B cell (primary cell): ENCODE measurements at regions of chr19 and their contacts with region 1.

Region 1: DNA sequence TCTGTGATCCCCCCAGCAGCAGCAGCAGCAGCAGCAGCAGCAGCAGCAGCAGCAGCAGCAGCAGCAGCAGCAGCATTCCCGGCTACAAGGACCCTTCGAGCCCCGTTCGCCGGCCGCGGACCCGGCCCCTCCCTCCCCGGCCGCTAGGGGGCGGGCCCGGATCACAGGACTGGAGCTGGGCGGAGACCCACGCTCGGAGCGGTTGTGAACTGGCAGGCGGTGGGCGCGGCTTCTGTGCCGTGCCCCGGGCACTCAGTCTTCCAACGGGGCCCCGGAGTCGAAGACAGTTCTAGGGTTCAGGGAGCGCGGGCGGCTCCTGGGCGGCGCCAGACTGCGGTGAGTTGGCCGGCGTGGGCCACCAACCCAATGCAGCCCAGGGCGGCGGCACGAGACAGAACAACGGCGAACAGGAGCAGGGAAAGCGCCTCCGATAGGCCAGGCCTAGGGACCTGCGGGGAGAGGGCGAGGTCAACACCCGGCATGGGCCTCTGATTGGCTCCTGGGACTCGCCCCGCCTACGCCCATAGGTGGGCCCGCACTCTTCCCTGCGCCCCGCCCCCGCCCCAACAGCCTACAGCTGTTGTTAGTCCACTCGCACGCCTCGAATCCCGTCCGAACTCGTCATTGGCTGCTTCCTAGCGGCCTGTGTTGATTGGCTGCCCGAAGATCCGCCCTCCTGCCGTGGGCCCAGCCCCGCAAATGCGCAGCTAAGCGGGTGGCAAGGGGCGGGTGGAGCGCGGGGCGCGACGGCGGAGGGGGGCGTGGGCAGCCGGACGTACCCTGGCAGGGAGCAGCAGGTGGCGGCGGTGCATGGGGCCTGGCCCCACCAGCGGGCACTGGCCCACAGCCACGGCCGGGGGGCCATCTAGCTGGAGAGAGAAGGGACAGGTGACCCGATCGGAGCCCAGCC is 1.4 kb upstream of the SIX5 start:
- DNase-seq: peak; percentile 95
- ATAC-seq: peak; percentile 68
- H3K4me3 ChIP-seq: peak overlapping the region in 4 of 5 experiments; percentile 71 to 88 (median 82)
- H3K4me3 Mint-ChIP-seq: peak overlapping the region; percentile 90
- H3K27ac ChIP-seq: peak overlapping the region; percentile 29 to 56
- H3K27ac Mint-ChIP-seq: peak overlapping the region; percentile 86
- H3K4me1 ChIP-seq: peaks cover 12 to 32% of the 10 kb centered on the region in 2 donors
- H3K4me1 Mint-ChIP-seq: peaks cover 29% of the 10 kb centered on the region
- H3K27me3 ChIP-seq: peaks cover 0 to 28% (median 8%) of the 10 kb centered on the region in 4 experiments
- H3K27me3 Mint-ChIP-seq: no peaks in the 10 kb centered on the region
- CTCF ChIP-seq: peak; percentile 96

Region 2: GRCh38 chr19:45621389-45621788 is 149.1 kb before region 1 on chr19:
- CTCF ChIA-PET with region 1: no interaction called
- POLR2A ChIA-PET with region 1: no interaction called
- intact Hi-C with region 1: no loop called
- DNase-seq: no peak
- ATAC-seq: no peak
- H3K4me3 ChIP-seq: no peak overlapping the region
- H3K4me3 Mint-ChIP-seq: no peak overlapping the region
- H3K27ac ChIP-seq: no peak overlapping the region
- H3K27ac Mint-ChIP-seq: no peak overlapping the region
- H3K4me1 ChIP-seq: no peaks in the 10 kb centered on the region
- H3K4me1 Mint-ChIP-seq: no peaks in the 10 kb centered on the region
- H3K27me3 ChIP-seq: no peaks in the 10 kb centered on the region
- H3K27me3 Mint-ChIP-seq: no peaks in the 10 kb centered on the region
- CTCF ChIP-seq: no peak

Region 3: GRCh38 chr19:45717166-45717982 is 53.1 kb before region 1 on chr19:
- CTCF ChIA-PET with region 1: interaction called, 4 read pairs
- POLR2A ChIA-PET with region 1: interaction called, 5 read pairs
- intact Hi-C with region 1: loop called (anchors 1 kb)
- DNase-seq: peak; percentile 97
- ATAC-seq: peak; percentile 95
- H3K4me3 ChIP-seq: peak overlapping the region; percentile 76 to 93 (median 82)
- H3K4me3 Mint-ChIP-seq: peak overlapping the region; percentile 91
- H3K27ac ChIP-seq: peak overlapping the region; percentile 76 to 94
- H3K27ac Mint-ChIP-seq: peak overlapping the region; percentile 97
- H3K4me1 ChIP-seq: peaks cover 18 to 25% of the 10 kb centered on the region in 2 donors
- H3K4me1 Mint-ChIP-seq: peaks cover 39% of the 10 kb centered on the region
- H3K27me3 ChIP-seq: no peaks in the 10 kb centered on the region
- H3K27me3 Mint-ChIP-seq: no peaks in the 10 kb centered on the region
- CTCF ChIP-seq: no peak

Region 4: DNA sequence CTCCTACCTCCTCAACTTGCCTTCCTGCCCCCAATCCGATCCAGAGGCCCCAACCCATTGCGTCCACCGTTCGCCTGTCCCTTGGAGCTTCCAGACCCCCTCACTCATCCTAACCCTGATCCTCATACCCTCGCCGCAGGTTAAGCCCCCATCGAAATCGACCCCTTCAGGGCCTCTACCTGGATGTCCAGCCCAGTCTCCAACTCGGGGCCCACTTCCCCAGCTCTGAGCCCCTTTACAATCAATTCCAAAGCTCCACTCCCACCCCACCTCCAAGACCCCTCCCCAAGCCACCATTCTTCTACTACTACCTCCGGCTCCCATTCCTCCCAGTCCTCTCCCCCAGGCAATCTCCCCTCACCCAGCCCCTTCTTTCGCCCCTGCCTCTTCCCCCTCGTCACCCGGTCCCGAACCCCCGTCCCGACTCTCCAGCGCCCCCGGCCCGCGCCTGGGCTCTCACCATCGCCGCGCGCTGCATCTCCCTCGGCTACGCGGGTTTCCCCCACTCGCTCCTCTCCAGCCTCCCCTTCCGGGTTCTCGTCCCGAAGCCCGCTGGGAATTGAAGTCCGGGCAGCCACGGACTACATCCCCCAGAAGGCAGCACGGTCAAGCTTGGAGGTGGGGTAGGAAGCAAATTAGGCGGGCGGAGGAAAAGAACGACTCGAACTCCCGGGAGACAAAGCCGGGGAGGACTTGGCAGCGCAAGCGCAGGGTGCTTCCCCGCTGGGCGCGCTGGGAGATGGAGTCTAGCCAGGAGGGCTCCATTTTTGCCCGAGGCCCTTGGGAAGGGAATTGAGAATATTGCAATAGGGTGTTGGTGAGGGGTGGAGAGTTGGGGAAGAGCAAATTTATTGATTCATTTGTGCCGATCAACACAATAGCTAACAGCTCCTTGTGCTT is 39.8 kb before region 1 on chr19 and contains the start of gene FBXO46:
- CTCF ChIA-PET with region 1: interaction called, 6 read pairs
- POLR2A ChIA-PET with region 1: interaction called, 11 read pairs
- intact Hi-C with region 1: loop called (anchors 2 kb)
- DNase-seq: peak; percentile 96
- ATAC-seq: peak; percentile 97
- H3K4me3 ChIP-seq: peak within 1 kb of the TSS; percentile 68 to 98 (median 87)
- H3K4me3 Mint-ChIP-seq: peak within 1 kb of the TSS; percentile 94
- H3K27ac ChIP-seq: peak within 1 kb of the TSS; percentile 54 to 94
- H3K27ac Mint-ChIP-seq: peak within 1 kb of the TSS; percentile 94
- H3K4me1 ChIP-seq: peaks cover 11 to 25% of the 10 kb centered on the region in 2 donors
- H3K4me1 Mint-ChIP-seq: peaks cover 28% of the 10 kb centered on the region
- H3K27me3 ChIP-seq: no peaks in the 10 kb centered on the region
- H3K27me3 Mint-ChIP-seq: no peaks in the 10 kb centered on the region
- CTCF ChIP-seq: peak; percentile 26
- total RNA-seq, gene FBXO46: 43.7 and 44.5 TPM in 2 replicates

Region 5: GRCh38 chr19:45798995-45799517 is 28.6 kb after region 1 on chr19:
- CTCF ChIA-PET with region 1: interaction called, 302 read pairs
- POLR2A ChIA-PET with region 1: interaction called, 23 read pairs
- intact Hi-C with region 1: loop called (anchors 1 kb)
- DNase-seq: peak; percentile 83
- ATAC-seq: peak; percentile 90
- H3K4me3 ChIP-seq: no peak overlapping the region
- H3K4me3 Mint-ChIP-seq: no peak overlapping the region
- H3K27ac ChIP-seq: no peak overlapping the region
- H3K27ac Mint-ChIP-seq: no peak overlapping the region
- H3K4me1 ChIP-seq: peaks cover 3 to 6% of the 10 kb centered on the region in 2 donors
- H3K4me1 Mint-ChIP-seq: peaks cover 9% of the 10 kb centered on the region
- H3K27me3 ChIP-seq: peaks cover 0 to 12% (median 0%) of the 10 kb centered on the region in 4 experiments
- H3K27me3 Mint-ChIP-seq: peaks cover 14% of the 10 kb centered on the region
- CTCF ChIP-seq: peak; percentile 95

Region 6: GRCh38 chr19:45817010-45817724 is 46.7 kb after region 1 on chr19:
- CTCF ChIA-PET with region 1: interaction called, 23 read pairs
- POLR2A ChIA-PET with region 1: no interaction called
- intact Hi-C with region 1: loop called (anchors 1 kb)
- DNase-seq: peak; percentile 96
- ATAC-seq: peak; percentile 100
- H3K4me3 ChIP-seq: no peak overlapping the region
- H3K4me3 Mint-ChIP-seq: peak overlapping the region; percentile 54
- H3K27ac ChIP-seq: no peak overlapping the region
- H3K27ac Mint-ChIP-seq: peak overlapping the region; percentile 75
- H3K4me1 ChIP-seq: peaks cover 19 to 23% of the 10 kb centered on the region in 2 donors
- H3K4me1 Mint-ChIP-seq: peaks cover 11% of the 10 kb centered on the region
- H3K27me3 ChIP-seq: peaks cover 0 to 6% (median 2%) of the 10 kb centered on the region in 4 experiments
- H3K27me3 Mint-ChIP-seq: peaks cover 3% of the 10 kb centered on the region
- CTCF ChIP-seq: peak; percentile 97

Region 7: GRCh38 chr19:45994989-45995714 is 224.7 kb after region 1 on chr19 and contains the start of gene CCDC61:
- CTCF ChIA-PET with region 1: interaction called, 6 read pairs
- POLR2A ChIA-PET with region 1: no interaction called
- intact Hi-C with region 1: loop called (anchors 1 kb)
- DNase-seq: peak; percentile 99
- ATAC-seq: peak; percentile 93
- H3K4me3 ChIP-seq: peak within 1 kb of the TSS; percentile 71 to 92 (median 78)
- H3K4me3 Mint-ChIP-seq: peak within 1 kb of the TSS; percentile 58
- H3K27ac ChIP-seq: peak within 1 kb of the TSS; percentile 55 to 84
- H3K27ac Mint-ChIP-seq: no peak within 1 kb of the TSS
- H3K4me1 ChIP-seq: peaks cover 19 to 21% of the 10 kb centered on the region in 2 donors
- H3K4me1 Mint-ChIP-seq: peaks cover 27% of the 10 kb centered on the region
- H3K27me3 ChIP-seq: peaks cover 0 to 9% (median 5%) of the 10 kb centered on the region in 4 experiments
- H3K27me3 Mint-ChIP-seq: peaks cover 21% of the 10 kb centered on the region
- CTCF ChIP-seq: no peak
- total RNA-seq, gene CCDC61: 30.1 and 37.0 TPM in 2 replicates